MCF 10A (cell line): ENCODE measurements at regions of chr5 and their contacts with region 1.

Region 1: GRCh38 chr5:55691265-55692105 is 20.6 kb downstream of the SLC38A9 start:
- DNase-seq: peak; percentile 56
- H3K4me3 Mint-ChIP-seq: no peak overlapping the region
- H3K27ac Mint-ChIP-seq: no peak overlapping the region
- H3K4me1 Mint-ChIP-seq: no peaks in the 10 kb centered on the region
- H3K27me3 Mint-ChIP-seq: no peaks in the 10 kb centered on the region
- CTCF ChIP-seq: peak; percentile 61

Region 2: DNA sequence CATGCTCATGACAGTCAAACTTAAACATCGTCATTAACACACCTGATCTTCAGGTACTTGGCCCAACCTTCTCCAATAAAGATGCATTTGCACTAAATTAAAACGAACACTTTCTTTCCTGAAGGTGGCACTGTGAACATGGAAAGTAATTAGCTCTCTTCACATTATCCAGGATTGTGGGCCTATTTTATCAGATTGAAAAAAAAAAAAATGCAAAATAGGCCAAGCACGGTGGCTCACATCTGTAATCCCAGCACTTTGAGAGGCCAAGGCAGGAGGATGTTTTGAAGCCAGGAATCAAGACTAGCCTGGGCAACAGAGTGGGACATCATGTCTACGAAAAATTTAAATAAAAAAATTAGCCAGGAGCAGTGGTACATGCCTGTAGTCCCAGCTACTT is 504.1 kb before region 1 on chr5:
- CTCF ChIA-PET with region 1: no interaction called
- POLR2A ChIA-PET with region 1: no interaction called
- intact Hi-C with region 1: loop called (anchors 5 kb)
- DNase-seq: peak; percentile 61
- H3K4me3 Mint-ChIP-seq: no peak overlapping the region
- H3K27ac Mint-ChIP-seq: no peak overlapping the region
- H3K4me1 Mint-ChIP-seq: peaks cover 7% of the 10 kb centered on the region
- H3K27me3 Mint-ChIP-seq: peaks cover 24% of the 10 kb centered on the region
- CTCF ChIP-seq: peak; percentile 56

Region 3: GRCh38 chr5:55344392-55344992 is 347.0 kb before region 1 on chr5:
- CTCF ChIA-PET with region 1: interaction called, 12 read pairs
- POLR2A ChIA-PET with region 1: no interaction called
- intact Hi-C with region 1: loop called (anchors 1 kb)
- DNase-seq: peak; percentile 70
- H3K4me3 Mint-ChIP-seq: no peak overlapping the region
- H3K27ac Mint-ChIP-seq: peak overlapping the region; percentile 66
- H3K4me1 Mint-ChIP-seq: no peaks in the 10 kb centered on the region
- H3K27me3 Mint-ChIP-seq: no peaks in the 10 kb centered on the region
- CTCF ChIP-seq: peak; percentile 52

Region 4: GRCh38 chr5:55418994-55419968 is 272.2 kb before region 1 on chr5:
- CTCF ChIA-PET with region 1: interaction called, 12 read pairs
- POLR2A ChIA-PET with region 1: no interaction called
- intact Hi-C with region 1: no loop called
- DNase-seq: no peak
- H3K4me3 Mint-ChIP-seq: no peak overlapping the region
- H3K27ac Mint-ChIP-seq: no peak overlapping the region
- H3K4me1 Mint-ChIP-seq: no peaks in the 10 kb centered on the region
- H3K27me3 Mint-ChIP-seq: no peaks in the 10 kb centered on the region
- CTCF ChIP-seq: no peak

Region 5: GRCh38 chr5:55621229-55621628 is 70.3 kb before region 1 on chr5:
- CTCF ChIA-PET with region 1: no interaction called
- POLR2A ChIA-PET with region 1: no interaction called
- intact Hi-C with region 1: no loop called
- DNase-seq: no peak
- H3K4me3 Mint-ChIP-seq: no peak overlapping the region
- H3K27ac Mint-ChIP-seq: no peak overlapping the region
- H3K4me1 Mint-ChIP-seq: no peaks in the 10 kb centered on the region
- H3K27me3 Mint-ChIP-seq: no peaks in the 10 kb centered on the region
- CTCF ChIP-seq: no peak